Mammary epithelial cell (primary cell): ENCODE measurements at regions of chr7 and their contacts with region 1.

Region 1: GRCh38 chr7:152463709-152464311 is 28.0 kb upstream of the KMT2C start:
- DNase-seq: peak; percentile 99
- H3K4me3 ChIP-seq: peak overlapping the region; percentile 87 to 90 (median 89)
- H3K27ac ChIP-seq: peak overlapping the region; percentile 50
- H3K4me1 ChIP-seq: peaks cover 5% of the 10 kb centered on the region
- H3K27me3 ChIP-seq: no peaks in the 10 kb centered on the region
- CTCF ChIP-seq: no peak

Region 2: GRCh38 chr7:152522571-152523067 is 58.8 kb after region 1 on chr7:
- CTCF ChIA-PET with region 1: no interaction called
- dilution Hi-C with region 1: no loop called
- in situ Hi-C with region 1: no loop called
- intact Hi-C with region 1: no loop called
- DNase-seq: no peak
- H3K4me3 ChIP-seq: no peak overlapping the region
- H3K27ac ChIP-seq: no peak overlapping the region
- H3K4me1 ChIP-seq: no peaks in the 10 kb centered on the region
- H3K27me3 ChIP-seq: no peaks in the 10 kb centered on the region
- CTCF ChIP-seq: no peak

Region 3: GRCh38 chr7:152597512-152597911 is 133.7 kb after region 1 on chr7:
- CTCF ChIA-PET with region 1: no interaction called
- dilution Hi-C with region 1: no loop called
- in situ Hi-C with region 1: no loop called
- intact Hi-C with region 1: loop called (anchors 10 kb)
- DNase-seq: no peak
- H3K4me3 ChIP-seq: no peak overlapping the region
- H3K27ac ChIP-seq: no peak overlapping the region
- H3K4me1 ChIP-seq: no peaks in the 10 kb centered on the region
- H3K27me3 ChIP-seq: no peaks in the 10 kb centered on the region
- CTCF ChIP-seq: no peak

Region 4: GRCh38 chr7:152675759-152676636 is 212.2 kb after region 1 on chr7 and contains the start of gene XRCC2:
- CTCF ChIA-PET with region 1: no interaction called
- dilution Hi-C with region 1: no loop called
- in situ Hi-C with region 1: no loop called
- intact Hi-C with region 1: loop called (anchors 10 kb)
- DNase-seq: peak; percentile 89
- H3K4me3 ChIP-seq: peak within 1 kb of the TSS; percentile 72 to 100 (median 94)
- H3K27ac ChIP-seq: peak within 1 kb of the TSS; percentile 91
- H3K4me1 ChIP-seq: peaks cover 5% of the 10 kb centered on the region
- H3K27me3 ChIP-seq: no peaks in the 10 kb centered on the region
- CTCF ChIP-seq: no peak
- total RNA-seq, gene XRCC2: 1.2 to 7.6 TPM